ENCODE measurements at regions of chr18 and their contacts with region 1.

Region 1: DNA sequence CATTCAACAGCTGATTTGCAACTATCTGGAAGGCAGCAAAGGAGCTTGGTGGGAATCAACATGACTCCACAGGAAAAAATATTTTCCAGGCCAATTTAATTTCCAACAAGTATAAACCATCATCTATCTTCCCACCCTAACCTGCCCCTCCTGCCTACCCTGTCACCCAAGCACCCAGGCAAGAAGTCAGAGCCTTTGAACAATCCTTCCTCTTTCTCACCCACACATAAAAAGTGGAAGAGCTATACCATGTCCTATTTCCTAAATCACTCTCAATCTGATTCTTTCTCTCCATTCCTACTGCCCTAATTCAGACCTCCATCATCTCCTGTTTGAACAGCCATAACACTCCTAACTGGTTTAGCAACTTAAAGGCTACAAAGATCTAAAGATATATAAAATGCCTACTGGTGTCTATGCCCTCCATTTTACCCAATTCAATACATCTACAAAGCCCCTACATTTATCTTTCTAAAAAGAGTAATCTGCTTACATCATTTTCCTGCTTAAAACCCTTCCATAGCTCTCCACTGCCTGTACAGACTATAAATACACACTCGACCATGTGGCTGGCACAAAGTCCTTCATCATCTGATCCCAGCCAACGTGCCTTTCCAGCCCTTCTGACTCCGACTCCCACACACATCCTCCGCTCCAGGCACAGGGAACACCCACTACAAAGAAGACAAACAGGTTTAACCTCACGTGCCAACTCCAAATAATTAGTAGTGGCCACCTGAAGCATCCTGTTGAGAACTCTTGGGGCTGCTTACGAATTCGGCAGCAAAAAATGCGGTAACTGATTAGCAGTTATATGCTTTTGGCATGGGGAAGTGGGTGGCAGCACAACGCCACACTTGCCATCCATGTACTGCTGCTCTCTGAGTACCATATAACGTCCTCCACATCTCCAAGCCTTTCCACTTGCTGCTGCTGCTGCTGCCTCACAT is 12.4 kb downstream of the SPIRE1 start:
- DNase-seq: peak in 21 of 42 donors; percentile 23 to 82 (median 36)

Region 2: GRCh38 chr18:12552884-12553242 is 92.7 kb before region 1 on chr18:
- intact Hi-C with region 1: loop called (anchors 10 kb)
- DNase-seq: no peak

Region 3: DNA sequence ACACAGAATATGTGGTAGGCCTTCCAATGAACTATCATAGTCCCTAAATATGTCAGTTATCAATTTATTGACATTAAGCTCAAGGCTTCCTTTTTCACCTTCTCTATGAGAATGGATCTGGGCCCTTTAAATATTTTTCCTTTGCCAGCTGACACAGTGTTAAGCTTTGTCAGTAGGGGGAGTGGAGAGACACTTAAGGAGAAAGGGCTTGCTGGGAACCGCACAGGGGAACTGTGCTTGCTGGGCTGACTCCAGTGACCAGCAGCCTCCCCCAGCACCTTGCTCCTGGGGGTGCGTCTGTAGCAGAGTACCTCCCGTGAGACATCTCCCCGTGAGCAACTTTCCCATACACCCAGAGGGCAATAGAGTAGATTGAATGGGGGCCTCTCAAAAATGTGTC is 245.0 kb after region 1 on chr18:
- intact Hi-C with region 1: no loop called
- DNase-seq: no peak